Kidney (tissue), 22 donors: ENCODE measurements at regions of chr4 and their contacts with region 1.

Region 1: DNA sequence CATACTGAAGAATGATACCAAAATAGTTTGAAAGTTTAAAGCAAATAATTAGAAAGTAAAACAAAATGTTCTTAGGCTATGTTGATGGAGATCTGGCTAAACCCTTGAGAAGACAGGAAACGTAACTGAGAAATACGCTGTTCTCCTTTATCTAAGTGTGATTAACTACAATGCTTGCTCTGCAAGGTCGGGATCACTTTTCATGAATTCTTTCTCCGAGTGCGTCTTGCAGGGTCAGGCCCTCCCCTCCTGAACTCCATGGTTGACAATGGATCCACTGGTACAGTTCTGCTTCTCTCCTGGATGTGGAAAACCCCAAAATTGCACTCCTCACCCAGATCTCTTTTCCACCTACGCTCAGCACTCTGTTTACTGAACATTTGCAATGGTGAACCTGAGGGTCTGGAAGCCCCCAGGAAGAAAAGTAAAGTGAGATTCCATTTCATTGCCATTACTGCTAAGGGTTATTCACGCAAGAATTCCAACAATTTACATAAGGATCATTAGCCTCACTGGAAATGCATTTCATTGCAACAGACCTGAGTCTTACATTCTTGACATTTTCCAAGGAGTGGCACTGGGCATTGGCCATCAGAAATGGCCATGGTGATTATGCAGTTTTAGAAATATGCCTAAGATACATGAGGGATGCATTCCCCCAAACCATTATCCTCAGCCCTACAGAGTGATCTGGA is 24.6 kb upstream of the WWC2 start:
- DNase-seq: peak in 1 of 5 donors; percentile 23
- H3K4me3 ChIP-seq: no peak overlapping the region
- H3K27ac ChIP-seq: no peak overlapping the region
- H3K4me1 ChIP-seq: no peaks in the 10 kb centered on the region
- H3K27me3 ChIP-seq: no peaks in the 10 kb centered on the region
- CTCF ChIP-seq: no peak

Region 2: GRCh38 chr4:183256756-183257385 is 182.4 kb after region 1 on chr4:
- intact Hi-C with region 1: loop called (anchors 5 kb)
- DNase-seq: peak; percentile 37 to 71 (median 64)
- H3K4me3 ChIP-seq: no peak overlapping the region
- H3K27ac ChIP-seq: no peak overlapping the region
- H3K4me1 ChIP-seq: no peaks in the 10 kb centered on the region
- H3K27me3 ChIP-seq: no peaks in the 10 kb centered on the region
- CTCF ChIP-seq: peak; percentile 72

Region 3: GRCh38 chr4:183268556-183268955 is 194.1 kb after region 1 on chr4:
- intact Hi-C with region 1: no loop called
- DNase-seq: no peak
- H3K4me3 ChIP-seq: no peak overlapping the region
- H3K27ac ChIP-seq: no peak overlapping the region
- H3K4me1 ChIP-seq: no peaks in the 10 kb centered on the region
- H3K27me3 ChIP-seq: no peaks in the 10 kb centered on the region
- CTCF ChIP-seq: no peak